IMR-90 (cell line): ENCODE measurements at regions of chr11 and their contacts with region 1.

Region 1: GRCh38 chr11:10683429-10683828 is 10.1 kb downstream of the IRAG1 start:
- DNase-seq: no peak
- ATAC-seq: no peak
- H3K4me3 ChIP-seq: no peak overlapping the region
- H3K27ac ChIP-seq: peak overlapping the region; percentile 1; the same call in 1 of the 2 replicates
- H3K4me1 ChIP-seq: peaks cover 16% of the 10 kb centered on the region
- H3K27me3 ChIP-seq: no peaks in the 10 kb centered on the region
- CTCF ChIP-seq: no peak
- POLR2A ChIP-seq: no peak
- RAD21 ChIP-seq: no peak

Region 2: GRCh38 chr11:10638316-10638925 is 45.0 kb before region 1 on chr11:
- CTCF ChIA-PET with region 1: no interaction called
- POLR2A ChIA-PET with region 1: interaction called, 11 read pairs
- dilution Hi-C with region 1: no loop called
- in situ Hi-C with region 1: no loop called
- intact Hi-C with region 1: no loop called
- DNase-seq: no peak
- ATAC-seq: no peak
- H3K4me3 ChIP-seq: no peak overlapping the region
- H3K27ac ChIP-seq: no peak overlapping the region
- H3K4me1 ChIP-seq: peaks cover 14% of the 10 kb centered on the region
- H3K27me3 ChIP-seq: no peaks in the 10 kb centered on the region
- CTCF ChIP-seq: no peak
- POLR2A ChIP-seq: no peak
- RAD21 ChIP-seq: no peak